GM18951 (cell line): ENCODE measurements at regions of chr12 and their contacts with region 1.

Region 1: DNA sequence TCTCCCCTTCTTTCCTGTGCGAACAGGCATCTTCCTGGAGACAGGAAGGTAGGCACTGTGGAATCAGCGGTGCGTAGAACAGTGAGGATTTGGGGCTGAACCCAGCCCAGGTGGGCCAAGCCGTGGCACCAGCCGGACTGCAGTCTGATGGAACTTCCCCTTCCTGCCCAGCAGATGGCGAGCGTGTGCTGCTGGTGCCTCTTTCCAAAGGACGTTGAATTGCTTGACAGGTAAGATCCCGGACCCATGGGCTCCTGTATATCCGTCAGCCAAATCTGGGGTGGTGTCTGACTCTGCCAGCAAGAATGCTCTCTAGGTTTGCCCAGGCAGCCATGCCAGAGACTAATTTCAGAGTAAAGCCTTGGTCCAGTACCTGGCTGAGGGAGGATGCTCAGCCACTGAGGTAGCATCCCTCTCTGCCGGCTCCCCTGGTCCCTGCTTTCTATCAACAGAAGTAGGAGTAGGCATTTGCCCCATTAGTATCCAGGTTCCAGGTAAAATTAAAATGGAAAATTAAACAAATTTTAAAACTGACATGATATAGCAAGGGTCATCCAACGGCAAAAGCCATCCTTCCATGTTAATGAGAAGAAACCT is 21.1 kb upstream of the KCNA5 start:
- POLR2A ChIP-seq: no peak

Region 2: DNA sequence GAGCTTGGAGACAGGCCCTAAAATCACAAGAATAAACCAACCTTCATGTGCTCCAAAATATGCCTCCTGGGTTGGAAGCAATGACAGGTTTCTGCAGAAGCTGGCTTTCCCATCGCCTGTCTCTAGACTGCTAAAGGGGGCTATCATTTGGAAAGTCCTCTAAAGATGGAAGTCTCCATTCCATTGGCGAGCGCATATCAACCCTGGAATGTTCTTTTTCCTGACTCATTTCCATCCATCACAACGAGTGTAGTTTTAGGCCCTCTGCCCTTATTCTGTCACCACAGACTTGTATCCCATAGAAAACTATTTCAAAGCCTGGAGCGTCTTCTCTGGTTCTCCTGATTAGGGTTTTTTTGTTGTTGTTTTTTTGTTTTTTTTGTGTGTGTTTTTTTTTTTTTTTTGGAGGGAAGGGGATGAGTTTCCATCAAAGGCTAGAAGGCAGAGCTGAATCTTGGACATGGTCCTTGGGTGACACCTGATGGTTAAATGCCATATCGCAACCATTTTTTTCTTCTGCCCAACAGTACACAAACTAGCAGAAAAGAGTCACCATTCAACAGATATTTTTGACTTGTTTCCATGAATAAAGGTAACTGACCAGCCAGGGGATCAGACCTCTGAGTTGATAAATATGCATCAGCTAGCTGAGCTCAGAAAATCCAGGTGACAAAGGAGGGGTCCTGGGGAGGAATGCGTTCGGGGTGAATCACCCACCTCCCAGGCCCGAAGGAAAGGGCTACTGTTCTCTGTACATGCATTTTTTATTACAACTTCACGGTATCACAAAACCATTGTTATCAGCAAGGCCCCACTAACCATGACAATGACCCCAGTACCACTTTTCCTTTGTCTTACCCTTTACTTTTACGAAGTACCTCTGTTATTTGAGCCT is 61.6 kb after region 1 on chr12:
- in situ Hi-C with region 1: loop called (anchors 5 kb)
- POLR2A ChIP-seq: no peak

Region 3: GRCh38 chr12:5442251-5443006 is 419.9 kb after region 1 on chr12:
- in situ Hi-C with region 1: no loop called
- POLR2A ChIP-seq: no peak